A673 (cell line): ENCODE measurements at regions of chr22 and their contacts with region 1.

Region 1: GRCh38 chr22:37792494-37792893 is 15.2 kb upstream of the GCAT start:
- DNase-seq: no peak
- H3K4me3 ChIP-seq: no peak overlapping the region
- H3K27ac ChIP-seq: no peak overlapping the region
- H3K4me1 ChIP-seq: no peaks in the 10 kb centered on the region
- H3K27me3 ChIP-seq: no peaks in the 10 kb centered on the region
- CTCF ChIP-seq: no peak

Region 2: DNA sequence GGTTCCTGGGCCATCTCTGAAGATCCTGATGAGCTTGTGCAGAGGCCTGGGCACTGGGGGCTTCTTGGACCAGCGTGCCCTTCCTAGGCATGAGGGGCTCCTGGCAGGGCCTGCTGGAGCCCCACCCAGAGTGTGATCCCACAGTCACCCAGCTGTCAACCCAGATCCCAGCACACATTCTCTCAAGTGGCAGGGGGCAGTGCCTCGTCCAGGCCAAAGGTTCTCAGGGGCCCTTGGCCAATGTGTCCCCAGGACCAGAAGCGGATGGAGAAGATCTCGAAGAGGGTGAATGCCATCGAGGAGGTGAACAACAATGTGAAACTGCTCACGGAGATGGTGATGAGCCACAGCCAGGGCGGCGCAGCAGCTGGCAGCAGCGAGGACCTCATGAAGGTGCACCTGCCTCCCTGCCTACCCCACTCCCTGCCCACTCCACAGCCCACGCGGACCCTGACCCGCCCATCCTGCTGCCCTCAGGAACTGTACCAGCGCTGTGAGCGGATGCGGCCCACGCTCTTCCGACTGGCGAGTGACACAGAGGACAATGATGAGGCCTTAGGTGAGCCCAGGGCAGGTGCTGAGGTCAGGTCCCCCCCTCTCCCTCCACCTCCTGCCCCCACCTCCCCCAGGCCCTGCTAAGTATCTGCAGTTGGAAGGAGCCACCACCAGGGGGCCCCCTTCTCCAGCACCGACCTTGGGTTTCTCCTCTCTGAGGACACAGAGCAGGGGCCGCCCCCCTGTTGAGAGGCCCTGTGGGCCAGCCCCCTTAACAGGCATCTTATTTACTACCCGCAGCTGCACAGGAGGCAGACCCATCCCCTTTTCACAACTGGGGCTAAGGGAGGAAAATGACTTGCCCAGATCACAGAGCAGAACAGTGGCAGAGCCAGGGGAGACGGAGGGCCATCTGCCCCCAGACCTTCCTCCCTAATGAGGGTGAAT is 169.1 kb before region 1 on chr22:
- CTCF ChIA-PET with region 1: no interaction called
- POLR2A ChIA-PET with region 1: no interaction called
- intact Hi-C with region 1: loop called (anchors 5 kb)
- DNase-seq: peak; percentile 65
- H3K4me3 ChIP-seq: no peak overlapping the region
- H3K27ac ChIP-seq: peak overlapping the region; percentile 58
- H3K4me1 ChIP-seq: peaks cover 14% of the 10 kb centered on the region
- H3K27me3 ChIP-seq: no peaks in the 10 kb centered on the region
- CTCF ChIP-seq: peak; percentile 95

Region 3: DNA sequence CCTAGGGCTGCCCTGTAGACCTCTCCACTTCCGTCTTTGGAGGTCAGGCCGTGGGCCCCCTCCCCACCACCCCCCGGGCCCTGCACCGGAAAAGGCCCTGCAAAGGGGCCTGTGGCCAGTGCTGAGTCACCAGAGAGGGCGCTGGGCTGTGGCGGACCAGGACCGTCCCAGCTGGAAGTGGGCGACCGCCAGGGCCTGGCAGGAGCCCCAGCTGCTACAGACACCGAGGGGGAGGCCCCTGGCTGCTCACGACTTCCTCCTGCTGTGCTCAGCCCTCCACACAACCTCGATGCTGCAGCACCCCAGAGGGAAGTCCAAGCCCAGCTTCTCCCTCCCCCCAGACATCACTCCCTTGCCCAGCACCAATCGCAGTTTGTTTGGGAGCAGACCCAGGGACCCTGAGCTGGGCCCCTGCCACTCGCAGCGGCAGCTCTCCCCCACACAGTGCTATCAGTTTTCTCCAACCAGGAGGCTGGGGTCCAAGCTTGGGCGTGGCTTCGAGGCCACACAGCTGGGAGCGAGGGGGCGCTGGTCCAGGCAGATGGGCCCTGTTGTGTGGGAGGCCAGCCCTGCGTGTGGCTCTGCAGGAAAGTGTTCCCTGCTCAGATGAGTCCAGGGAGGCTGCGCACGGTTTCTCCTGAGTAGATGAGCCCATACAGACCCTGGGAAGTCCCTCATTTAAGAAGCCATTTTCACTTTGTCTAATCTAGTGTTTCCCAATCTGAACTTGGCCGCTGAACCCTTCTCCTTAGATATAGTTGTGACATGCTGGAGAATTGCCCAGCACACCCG is 158.7 kb before region 1 on chr22:
- CTCF ChIA-PET with region 1: interaction called, 11 read pairs
- POLR2A ChIA-PET with region 1: no interaction called
- intact Hi-C with region 1: no loop called
- DNase-seq: peak; percentile 86
- H3K4me3 ChIP-seq: no peak overlapping the region
- H3K27ac ChIP-seq: peak overlapping the region; percentile 77
- H3K4me1 ChIP-seq: peaks cover 22% of the 10 kb centered on the region
- H3K27me3 ChIP-seq: no peaks in the 10 kb centered on the region
- CTCF ChIP-seq: peak; percentile 32; the same call in 1 of the 2 replicates